IMR-90 (cell line): ENCODE measurements at regions of chr5 and their contacts with region 1.

Region 1: DNA sequence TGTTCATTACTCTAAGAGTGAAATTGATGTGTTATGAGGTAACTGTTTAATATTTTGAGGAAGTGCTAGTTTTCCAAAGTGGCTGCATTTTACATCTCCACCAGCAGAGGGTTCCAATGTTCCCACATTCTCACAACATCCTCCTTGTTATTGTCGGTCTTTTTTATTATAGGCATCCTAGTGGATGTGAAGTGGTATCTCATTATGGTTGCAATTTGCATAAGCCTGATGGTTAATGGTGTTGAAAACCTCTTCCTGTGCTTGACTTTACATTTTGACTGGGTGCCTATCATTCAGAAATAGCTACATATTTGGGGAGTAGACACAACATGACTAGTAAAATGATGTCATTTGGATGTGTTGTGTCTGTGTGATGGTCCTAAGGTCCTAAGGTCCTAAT is 143.6 kb downstream of the MRPS30 start:
- DNase-seq: peak; percentile 15
- ATAC-seq: peak; percentile 49; the same call in 1 of the 2 replicates
- H3K4me3 ChIP-seq: no peak overlapping the region
- H3K27ac ChIP-seq: no peak overlapping the region
- H3K4me1 ChIP-seq: no peaks in the 10 kb centered on the region
- H3K27me3 ChIP-seq: no peaks in the 10 kb centered on the region
- CTCF ChIP-seq: peak; percentile 59
- POLR2A ChIP-seq: no peak
- RAD21 ChIP-seq: peak; percentile 38

Region 2: DNA sequence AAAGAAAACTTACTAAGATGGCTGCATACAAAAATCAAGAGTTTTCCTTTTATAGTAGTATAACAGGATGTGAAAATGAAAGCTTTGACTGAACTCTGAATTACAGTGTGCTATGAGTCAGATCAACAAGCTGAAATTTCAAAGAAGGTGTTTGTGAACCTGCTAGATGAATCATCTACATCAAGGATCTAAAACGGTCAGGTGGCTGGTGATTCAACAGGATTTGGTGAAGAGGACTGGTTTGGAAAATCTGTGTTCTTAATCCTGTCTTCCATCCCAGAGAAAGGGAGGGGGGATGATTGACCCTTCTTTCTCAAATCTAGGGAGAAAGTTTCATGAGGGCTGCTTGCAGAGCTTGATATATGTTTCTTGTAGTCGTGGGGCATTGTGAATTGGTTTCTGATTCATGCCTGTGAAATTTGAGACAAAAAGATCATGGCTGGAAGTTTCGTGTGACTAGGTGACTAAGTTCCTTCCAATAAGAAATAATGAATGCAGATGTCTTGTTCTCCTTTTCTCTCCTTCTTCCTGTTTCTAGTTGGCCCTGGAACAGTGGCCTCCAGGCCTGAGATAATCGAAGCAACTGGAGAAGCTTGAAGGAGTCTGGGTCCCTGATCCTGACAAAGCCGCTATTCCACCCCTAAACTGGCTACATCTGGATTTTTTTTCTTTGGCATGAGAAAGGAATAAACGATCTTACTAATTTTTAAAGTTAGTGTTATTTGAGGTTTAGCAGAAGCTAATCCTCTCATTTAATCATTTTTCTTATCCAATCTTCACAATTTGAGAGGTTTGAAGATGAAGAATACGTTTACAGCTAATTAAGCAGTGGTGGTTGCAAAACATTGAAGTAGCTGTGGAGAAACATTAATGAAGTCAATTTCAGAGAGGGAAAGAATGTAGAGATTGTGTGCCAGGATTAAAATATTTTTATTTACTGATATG is 76.4 kb before region 1 on chr5:
- CTCF ChIA-PET with region 1: no interaction called
- POLR2A ChIA-PET with region 1: no interaction called
- dilution Hi-C with region 1: no loop called
- in situ Hi-C with region 1: no loop called
- intact Hi-C with region 1: no loop called
- DNase-seq: peak; percentile 52
- ATAC-seq: no peak
- H3K4me3 ChIP-seq: no peak overlapping the region
- H3K27ac ChIP-seq: no peak overlapping the region
- H3K4me1 ChIP-seq: no peaks in the 10 kb centered on the region
- H3K27me3 ChIP-seq: no peaks in the 10 kb centered on the region
- CTCF ChIP-seq: no peak
- POLR2A ChIP-seq: no peak
- RAD21 ChIP-seq: no peak

Region 3: DNA sequence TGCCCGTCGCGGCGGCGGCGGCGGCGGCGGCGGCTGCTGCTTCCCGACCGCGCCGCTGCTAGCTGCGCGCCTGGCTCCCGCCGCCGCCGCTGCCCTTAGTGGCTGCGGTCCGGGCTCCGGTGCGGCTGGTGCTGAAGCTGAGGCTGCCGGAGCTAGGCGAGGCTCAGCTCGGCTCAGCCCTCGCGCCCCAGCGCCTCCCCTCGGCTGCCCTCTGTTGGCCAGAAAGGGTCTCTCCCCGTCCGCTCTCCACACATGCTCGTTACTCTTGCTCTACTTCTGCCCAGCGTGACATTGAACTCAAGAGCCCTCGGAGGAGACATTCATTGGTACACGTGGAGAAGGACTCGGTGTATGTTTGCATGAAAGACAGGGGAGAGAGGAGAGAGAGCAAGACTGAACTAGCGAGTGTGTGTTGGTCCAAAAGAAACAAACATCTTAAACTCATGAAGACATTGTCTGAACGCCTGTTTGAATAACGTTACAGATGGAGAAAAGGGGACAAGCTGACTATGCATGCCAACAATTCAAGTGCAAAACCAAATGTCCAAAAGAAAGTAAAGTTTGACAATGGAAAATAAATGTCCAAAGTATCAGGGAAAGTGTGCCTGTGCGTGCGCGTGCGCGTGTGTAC is 743.9 kb after region 1 on chr5 and contains the start of gene HCN1:
- CTCF ChIA-PET with region 1: no interaction called
- POLR2A ChIA-PET with region 1: no interaction called
- dilution Hi-C with region 1: no loop called
- in situ Hi-C with region 1: no loop called
- intact Hi-C with region 1: loop called (anchors 5 kb)
- DNase-seq: peak; percentile 32
- ATAC-seq: peak; percentile 97
- H3K4me3 ChIP-seq: no peak within 1 kb of the TSS
- H3K27ac ChIP-seq: no peak within 1 kb of the TSS
- H3K4me1 ChIP-seq: no peaks in the 10 kb centered on the region
- H3K27me3 ChIP-seq: no peaks in the 10 kb centered on the region
- CTCF ChIP-seq: peak; percentile 64
- POLR2A ChIP-seq: no peak
- RAD21 ChIP-seq: peak; percentile 50
- total RNA-seq, gene HCN1: not detected in 2 replicates